ENCODE measurements at regions of chr6 and their contacts with region 1.

Region 1: GRCh38 chr6:33271458-33272274 is at the starts of genes RPS18 and VPS52:
- DNase-seq: peak; percentile 99
- H3K4me3 ChIP-seq: peak within 1 kb of the TSS; percentile 82 to 88
- H3K27ac ChIP-seq: peak within 1 kb of the TSS; percentile 85 to 91
- H3K4me1 ChIP-seq: peaks cover 28% of the 10 kb centered on the region
- H3K27me3 ChIP-seq: no peaks in the 10 kb centered on the region
- CTCF ChIP-seq: peak in 1 of 3 experiments; percentile 6
- POLR2A ChIP-seq: peak; percentile 96
- total RNA-seq, gene RPS18: 685 to 1,953 TPM
- total RNA-seq, gene VPS52: 71.0 to 85.0 TPM

Region 2: DNA sequence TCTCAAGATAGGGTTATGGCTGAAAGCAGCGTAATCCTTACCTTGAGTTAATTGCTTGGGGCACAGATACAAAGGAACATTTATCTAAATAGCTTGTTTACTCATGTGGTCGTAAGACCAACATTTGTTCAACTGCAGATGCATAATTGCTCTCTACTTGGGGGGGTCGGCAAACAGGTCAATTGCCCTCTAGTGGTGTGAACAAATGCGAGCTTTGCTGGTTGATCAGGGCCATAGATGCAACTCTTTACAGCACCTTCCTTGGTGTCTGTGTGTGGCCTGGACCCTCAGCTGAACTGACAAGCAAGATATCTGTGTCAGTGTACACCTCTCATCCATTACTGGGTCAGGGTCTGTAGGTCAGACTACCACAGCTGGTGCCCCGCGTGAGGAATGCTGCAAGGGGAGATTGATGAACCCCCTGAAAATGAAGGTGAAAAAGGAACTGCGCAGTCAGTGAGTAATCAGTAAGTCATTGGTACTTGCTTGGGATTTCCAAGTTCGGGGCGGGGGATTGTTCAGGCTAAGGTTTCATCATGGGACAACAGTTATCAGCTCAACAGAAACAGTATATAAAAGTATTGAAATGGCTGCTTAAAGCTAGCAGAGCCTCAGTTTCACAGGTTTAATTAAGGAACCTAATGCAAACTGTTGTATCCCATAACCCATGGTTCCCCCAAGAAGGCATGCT is 222.2 kb before region 1 on chr6:
- intact Hi-C with region 1: no loop called
- DNase-seq: no peak
- H3K4me3 ChIP-seq: no peak overlapping the region
- H3K27ac ChIP-seq: no peak overlapping the region
- H3K4me1 ChIP-seq: no peaks in the 10 kb centered on the region
- H3K27me3 ChIP-seq: no peaks in the 10 kb centered on the region
- CTCF ChIP-seq: peak in 1 of 3 experiments; percentile 10
- POLR2A ChIP-seq: no peak

Region 3: GRCh38 chr6:33288921-33289748 is 17.5 kb after region 1 on chr6 and contains the starts of genes PFDN6 and WDR46:
- intact Hi-C with region 1: loop called (anchors 2 kb)
- DNase-seq: peak; percentile 95
- H3K4me3 ChIP-seq: peak within 1 kb of the TSS; percentile 75 to 79
- H3K27ac ChIP-seq: peak within 1 kb of the TSS; percentile 77 to 88
- H3K4me1 ChIP-seq: peaks cover 12% of the 10 kb centered on the region
- H3K27me3 ChIP-seq: no peaks in the 10 kb centered on the region
- CTCF ChIP-seq: no peak
- POLR2A ChIP-seq: no peak
- total RNA-seq, gene PFDN6: 45.5 to 56.2 TPM
- total RNA-seq, gene WDR46: 63.2 to 71.2 TPM